GM12878 (cell line): ENCODE measurements at regions of chr6 and their contacts with region 1.

Region 1: DNA sequence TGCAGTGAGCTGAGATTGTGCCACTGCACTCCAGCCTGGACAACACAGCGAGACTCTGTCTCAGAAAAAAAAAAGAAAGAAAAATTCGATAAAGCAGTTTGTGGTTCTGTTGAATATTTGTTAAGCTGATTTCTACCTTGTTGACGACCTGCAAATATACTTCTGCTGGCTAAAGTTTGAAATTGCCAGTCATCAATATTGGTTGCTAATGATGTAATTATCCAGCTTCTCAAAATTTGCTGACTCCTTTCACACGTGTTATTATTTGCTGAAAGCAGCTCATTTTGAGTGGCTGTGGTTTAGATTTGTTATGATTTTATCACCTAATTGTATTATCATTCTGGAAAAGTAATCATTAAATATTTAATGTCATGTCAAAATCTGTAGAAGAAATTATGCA is 774.3 kb downstream of the QKI start:
- DNase-seq: no peak
- ATAC-seq: no peak
- H3K4me3 ChIP-seq: no peak overlapping the region
- H3K27ac ChIP-seq: no peak overlapping the region
- H3K4me1 ChIP-seq: no peaks in the 10 kb centered on the region
- H3K27me3 ChIP-seq: no peaks in the 10 kb centered on the region
- CTCF ChIP-seq: no peak
- EP300 ChIP-seq: no peak
- POLR2A ChIP-seq: no peak
- RAD21 ChIP-seq: no peak

Region 2: GRCh38 chr6:164148788-164149187 is 40.1 kb before region 1 on chr6:
- CTCF ChIA-PET with region 1: no interaction called
- POLR2A ChIA-PET with region 1: no interaction called
- RAD21 ChIA-PET with region 1: no interaction called
- SMC1A ChIA-PET with region 1: no interaction called
- in situ Hi-C with region 1: no loop called
- intact Hi-C with region 1: no loop called
- DNase-seq: no peak
- ATAC-seq: no peak
- H3K4me3 ChIP-seq: no peak overlapping the region
- H3K27ac ChIP-seq: no peak overlapping the region
- H3K4me1 ChIP-seq: no peaks in the 10 kb centered on the region
- H3K27me3 ChIP-seq: no peaks in the 10 kb centered on the region
- CTCF ChIP-seq: no peak
- EP300 ChIP-seq: no peak
- POLR2A ChIP-seq: no peak
- RAD21 ChIP-seq: no peak

Region 3: GRCh38 chr6:164178679-164179332 is 10.1 kb before region 1 on chr6:
- CTCF ChIA-PET with region 1: interaction called, 10 read pairs
- POLR2A ChIA-PET with region 1: no interaction called
- RAD21 ChIA-PET with region 1: no interaction called
- SMC1A ChIA-PET with region 1: no interaction called
- in situ Hi-C with region 1: no loop called
- intact Hi-C with region 1: no loop called
- DNase-seq: no peak
- ATAC-seq: no peak
- H3K4me3 ChIP-seq: no peak overlapping the region
- H3K27ac ChIP-seq: no peak overlapping the region
- H3K4me1 ChIP-seq: no peaks in the 10 kb centered on the region
- H3K27me3 ChIP-seq: no peaks in the 10 kb centered on the region
- CTCF ChIP-seq: no peak
- EP300 ChIP-seq: no peak
- POLR2A ChIP-seq: no peak
- RAD21 ChIP-seq: no peak